ENCODE measurements at regions of chr17 and their contacts with region 1.

Region 1: GRCh38 chr17:13594762-13595598 is 6.7 kb downstream of the HS3ST3A1 start:
- DNase-seq: peak; percentile 89
- H3K4me3 Mint-ChIP-seq: no peak overlapping the region
- H3K27ac Mint-ChIP-seq: no peak overlapping the region
- H3K4me1 Mint-ChIP-seq: peaks cover 2% of the 10 kb centered on the region
- H3K27me3 Mint-ChIP-seq: peaks cover 21% of the 10 kb centered on the region

Region 2: DNA sequence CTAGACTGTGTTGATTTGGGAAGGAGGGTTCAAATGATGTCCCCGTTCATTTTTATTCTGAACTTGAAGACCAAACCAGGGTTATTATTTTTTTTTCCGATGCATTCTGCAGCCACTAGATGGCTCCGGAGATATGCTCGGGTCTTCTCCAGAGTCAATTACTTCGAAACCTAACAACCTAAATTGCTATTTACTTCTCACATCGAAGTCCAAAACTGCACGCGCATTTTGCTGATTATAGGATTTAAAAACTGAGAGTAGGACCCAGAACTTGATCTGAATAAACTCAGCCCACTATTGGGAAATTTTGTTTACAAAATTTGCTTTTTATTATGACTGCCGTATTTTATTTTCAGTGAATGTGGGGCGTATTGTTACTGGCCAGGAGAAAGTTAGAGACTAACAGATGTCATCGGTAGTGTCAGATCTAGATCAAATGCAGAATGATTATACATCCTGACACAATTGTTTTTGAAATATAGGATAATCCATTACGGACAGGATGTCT is 257.1 kb before region 1 on chr17:
- CTCF ChIA-PET with region 1: no interaction called
- intact Hi-C with region 1: loop called (anchors 2 kb)
- DNase-seq: peak; percentile 43
- H3K4me3 Mint-ChIP-seq: peak overlapping the region; percentile 8
- H3K27ac Mint-ChIP-seq: no peak overlapping the region
- H3K4me1 Mint-ChIP-seq: peaks cover 6% of the 10 kb centered on the region
- H3K27me3 Mint-ChIP-seq: peaks cover 34% of the 10 kb centered on the region

Region 3: GRCh38 chr17:13557077-13557476 is 37.9 kb before region 1 on chr17:
- CTCF ChIA-PET with region 1: no interaction called
- intact Hi-C with region 1: no loop called
- DNase-seq: no peak
- H3K4me3 Mint-ChIP-seq: no peak overlapping the region
- H3K27ac Mint-ChIP-seq: no peak overlapping the region
- H3K4me1 Mint-ChIP-seq: no peaks in the 10 kb centered on the region
- H3K27me3 Mint-ChIP-seq: peaks cover 2% of the 10 kb centered on the region

Region 4: GRCh38 chr17:14118951-14119350 is 524.0 kb after region 1 on chr17:
- CTCF ChIA-PET with region 1: no interaction called
- intact Hi-C with region 1: loop called (anchors 5 kb)
- DNase-seq: peak; percentile 37
- H3K4me3 Mint-ChIP-seq: no peak overlapping the region
- H3K27ac Mint-ChIP-seq: peak overlapping the region; percentile 96
- H3K4me1 Mint-ChIP-seq: peaks cover 88% of the 10 kb centered on the region
- H3K27me3 Mint-ChIP-seq: no peaks in the 10 kb centered on the region

Region 5: GRCh38 chr17:14553855-14554254 is 958.9 kb after region 1 on chr17:
- CTCF ChIA-PET with region 1: no interaction called
- intact Hi-C with region 1: loop called (anchors 5 kb)
- DNase-seq: no peak
- H3K4me3 Mint-ChIP-seq: no peak overlapping the region
- H3K27ac Mint-ChIP-seq: no peak overlapping the region
- H3K4me1 Mint-ChIP-seq: no peaks in the 10 kb centered on the region
- H3K27me3 Mint-ChIP-seq: no peaks in the 10 kb centered on the region

Region 6: GRCh38 chr17:14813649-14814365 is 1218.8 kb after region 1 on chr17:
- CTCF ChIA-PET with region 1: no interaction called
- intact Hi-C with region 1: loop called (anchors 2 kb)
- DNase-seq: peak; percentile 42
- H3K4me3 Mint-ChIP-seq: no peak overlapping the region
- H3K27ac Mint-ChIP-seq: no peak overlapping the region
- H3K4me1 Mint-ChIP-seq: peaks cover 8% of the 10 kb centered on the region
- H3K27me3 Mint-ChIP-seq: peaks cover 13% of the 10 kb centered on the region

Region 7: DNA sequence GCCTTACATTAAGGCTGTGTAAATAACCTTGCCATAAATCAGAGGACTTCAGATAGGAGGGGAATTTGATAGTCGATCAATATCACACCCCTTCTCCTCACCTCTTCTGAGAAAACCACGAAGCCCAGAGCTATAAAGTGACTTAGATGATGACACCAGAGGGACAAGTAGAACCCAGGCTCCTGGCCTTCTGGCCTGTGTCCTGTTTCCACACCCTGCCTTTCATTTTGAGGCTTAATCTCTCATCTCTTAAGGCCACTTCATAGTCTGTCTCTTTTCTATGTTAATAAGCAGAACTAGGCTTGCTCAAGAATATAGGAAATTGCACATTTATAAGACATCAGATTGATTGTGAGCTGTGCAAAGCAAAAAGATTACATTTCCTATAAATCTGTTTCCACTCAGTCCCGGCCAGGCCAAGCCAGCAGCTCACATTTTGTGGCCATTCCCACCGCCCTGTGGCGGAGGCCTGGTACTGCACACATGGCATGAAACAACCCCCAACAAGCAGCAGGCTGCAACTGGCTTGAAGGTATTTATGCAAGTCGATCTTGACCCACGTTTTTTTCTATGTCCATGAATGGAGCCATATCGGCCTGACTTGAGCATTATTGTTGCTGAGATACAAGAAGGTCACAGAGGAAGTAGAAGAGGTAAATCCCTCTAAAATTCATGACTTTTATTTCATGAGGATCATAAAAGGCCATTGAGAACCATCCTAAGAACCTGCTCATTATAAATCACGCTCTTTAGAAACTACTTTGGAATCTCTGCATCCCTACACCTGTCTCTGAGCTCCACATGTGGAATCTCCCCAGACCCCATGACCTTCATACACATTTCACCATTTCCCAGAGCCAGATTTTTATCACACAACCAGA is 1576.4 kb after region 1 on chr17:
- CTCF ChIA-PET with region 1: no interaction called
- intact Hi-C with region 1: loop called (anchors 10 kb)
- DNase-seq: peak; percentile 47
- H3K4me3 Mint-ChIP-seq: no peak overlapping the region
- H3K27ac Mint-ChIP-seq: no peak overlapping the region
- H3K4me1 Mint-ChIP-seq: no peaks in the 10 kb centered on the region
- H3K27me3 Mint-ChIP-seq: peaks cover 25% of the 10 kb centered on the region